PC-9 (cell line): ENCODE measurements at regions of chr19 and their contacts with region 1.

Region 1: GRCh38 chr19:13872695-13873389 is 4.1 kb upstream of the NANOS3 start:
- DNase-seq: peak; percentile 59 to 61
- H3K4me3 ChIP-seq: peak overlapping the region; percentile 65
- H3K27ac ChIP-seq: no peak overlapping the region
- H3K4me1 ChIP-seq: peaks cover 9% of the 10 kb centered on the region; the same call in 1 of the 2 replicates
- H3K27me3 ChIP-seq: no peaks in the 10 kb centered on the region
- CTCF ChIP-seq: peak; percentile 69; the same call in 1 of the 2 replicates

Region 2: GRCh38 chr19:13938301-13939064 is 65.6 kb after region 1 on chr19 and contains the start of gene PODNL1:
- CTCF ChIA-PET with region 1: interaction called, 12 read pairs
- POLR2A ChIA-PET with region 1: no interaction called
- intact Hi-C with region 1: no loop called
- DNase-seq: no peak
- H3K4me3 ChIP-seq: no peak within 1 kb of the TSS
- H3K27ac ChIP-seq: no peak within 1 kb of the TSS
- H3K4me1 ChIP-seq: no peaks in the 10 kb centered on the region
- H3K27me3 ChIP-seq: no peaks in the 10 kb centered on the region
- CTCF ChIP-seq: no peak
- total RNA-seq, gene PODNL1: 3.2 and 6.4 TPM in 2 replicates

Region 3: DNA sequence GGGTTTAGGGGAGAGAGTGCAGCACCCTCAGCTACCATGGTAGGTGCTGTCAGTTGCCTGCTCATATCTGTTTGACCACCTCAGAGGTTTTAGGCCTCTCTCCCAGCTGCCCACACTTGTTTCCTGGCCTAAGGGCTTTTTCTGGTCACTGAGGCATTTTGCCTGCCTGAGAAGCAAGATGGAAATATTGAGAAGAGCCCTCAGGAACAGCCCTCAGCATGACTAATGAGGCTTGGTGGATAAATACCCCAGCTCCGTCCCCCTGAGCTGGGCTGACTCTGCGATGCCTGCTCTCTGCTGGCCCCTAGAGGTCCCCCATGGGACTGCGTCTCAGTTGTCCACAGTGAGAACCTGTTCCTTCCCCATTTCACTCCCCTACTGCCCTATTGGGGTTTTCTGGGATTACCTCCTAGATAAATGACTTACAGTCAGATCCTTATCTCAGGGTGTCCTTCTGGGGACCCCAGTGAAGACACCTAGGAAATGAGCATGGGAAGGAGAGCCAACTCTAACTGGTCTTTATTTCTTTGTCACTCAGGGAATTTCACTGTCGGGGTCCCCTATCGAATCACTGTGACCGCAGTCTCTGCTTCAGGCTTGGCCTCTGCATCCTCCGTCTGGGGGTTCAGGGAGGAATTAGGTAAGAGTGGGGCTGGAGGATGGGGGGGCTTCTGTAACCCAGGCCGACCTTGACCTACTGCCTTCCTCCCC is 175.8 kb after region 1 on chr19:
- CTCF ChIA-PET with region 1: interaction called, 23 read pairs
- POLR2A ChIA-PET with region 1: no interaction called
- intact Hi-C with region 1: no loop called
- DNase-seq: peak; percentile 56 to 58
- H3K4me3 ChIP-seq: no peak overlapping the region
- H3K27ac ChIP-seq: no peak overlapping the region
- H3K4me1 ChIP-seq: no peaks in the 10 kb centered on the region
- H3K27me3 ChIP-seq: no peaks in the 10 kb centered on the region
- CTCF ChIP-seq: peak; percentile 95

Region 4: DNA sequence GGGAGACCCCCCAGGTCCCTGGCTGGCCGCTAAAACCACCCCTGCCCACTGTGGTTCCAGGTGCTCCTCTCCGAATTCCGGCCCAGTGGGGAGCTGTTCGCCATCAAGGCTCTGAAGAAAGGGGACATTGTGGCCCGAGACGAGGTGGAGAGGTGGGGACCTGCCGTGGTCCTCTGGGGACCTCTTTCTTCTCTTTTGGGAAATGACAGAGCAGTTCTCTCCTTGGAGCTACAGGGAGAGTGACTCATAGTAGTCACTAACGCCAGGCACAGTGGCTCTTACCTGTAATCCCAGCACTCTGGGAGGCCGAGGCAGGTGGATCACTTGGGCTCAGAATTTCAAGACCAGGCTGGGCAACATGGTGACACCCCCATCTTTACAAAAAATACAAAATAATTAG is 595.0 kb after region 1 on chr19:
- CTCF ChIA-PET with region 1: interaction called, 13 read pairs
- POLR2A ChIA-PET with region 1: no interaction called
- intact Hi-C with region 1: no loop called
- DNase-seq: peak in 1 of 2 experiments; percentile 51
- H3K4me3 ChIP-seq: no peak overlapping the region
- H3K27ac ChIP-seq: no peak overlapping the region
- H3K4me1 ChIP-seq: no peaks in the 10 kb centered on the region
- H3K27me3 ChIP-seq: no peaks in the 10 kb centered on the region
- CTCF ChIP-seq: peak; percentile 47